Heart right ventricle (tissue), 16 donors: ENCODE measurements at regions of chr14 and their contacts with region 1.

Region 1: DNA sequence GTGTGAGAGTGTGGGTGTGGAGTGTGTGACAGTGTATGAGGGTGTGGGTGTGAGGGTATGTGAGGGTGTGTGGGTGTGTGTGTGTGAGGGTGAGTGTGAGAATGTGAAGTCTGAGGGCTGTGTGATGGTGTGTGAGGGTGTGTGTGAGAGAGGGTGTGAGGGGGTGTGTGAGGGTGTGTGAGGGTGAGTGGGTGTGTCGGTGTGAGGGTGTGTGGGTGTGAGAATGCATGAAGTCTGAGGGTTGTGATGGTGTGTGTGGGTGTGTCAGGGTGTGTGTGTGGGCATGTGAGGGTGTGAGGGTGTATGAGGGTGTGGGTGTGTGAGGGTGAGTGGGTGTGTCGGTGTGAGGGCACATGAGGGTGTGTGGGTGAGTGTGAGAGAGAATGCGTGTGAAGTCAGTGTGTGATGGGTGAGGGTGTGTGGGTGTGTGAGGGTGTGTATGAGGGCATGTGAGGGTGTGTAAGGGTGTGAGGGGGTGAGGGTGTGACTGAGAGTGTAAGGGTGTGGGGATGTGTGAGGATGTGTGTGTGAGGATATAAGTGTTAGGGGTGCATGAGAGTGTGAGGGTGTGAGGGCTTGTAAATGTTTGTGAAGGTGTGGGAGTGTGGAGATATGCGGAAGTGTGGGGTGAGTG is 36.4 kb downstream of the TMEM121 start:
- DNase-seq: no peak
- ATAC-seq: no peak
- H3K4me3 ChIP-seq: no peak overlapping the region
- H3K27ac ChIP-seq: no peak overlapping the region
- H3K4me1 ChIP-seq: peaks cover 0 to 3% (median 0%) of the 10 kb centered on the region in 9 donors
- H3K27me3 ChIP-seq: peaks cover 0 to under 1% (median 0%) of the 10 kb centered on the region in 7 donors
- CTCF ChIP-seq: no peak

Region 2: GRCh38 chr14:105682940-105683570 is 120.2 kb after region 1 on chr14:
- intact Hi-C with region 1: loop called in 3 of 10 experiments (anchors 5 to 10 kb)
- DNase-seq: no peak
- ATAC-seq: no peak
- H3K4me3 ChIP-seq: no peak overlapping the region
- H3K27ac ChIP-seq: no peak overlapping the region
- H3K4me1 ChIP-seq: no peaks in the 10 kb centered on the region
- H3K27me3 ChIP-seq: peaks cover 0 to 2% (median 0%) of the 10 kb centered on the region in 7 donors
- CTCF ChIP-seq: no peak

Region 3: GRCh38 chr14:105760691-105761346 is 198.0 kb after region 1 on chr14:
- intact Hi-C with region 1: no loop called
- DNase-seq: no peak
- ATAC-seq: peak in 1 of 8 donors; percentile 76
- H3K4me3 ChIP-seq: no peak overlapping the region
- H3K27ac ChIP-seq: no peak overlapping the region
- H3K4me1 ChIP-seq: no peaks in the 10 kb centered on the region
- H3K27me3 ChIP-seq: no peaks in the 10 kb centered on the region
- CTCF ChIP-seq: no peak